ENCODE measurements at regions of chr17 and their contacts with region 1.

Region 1: DNA sequence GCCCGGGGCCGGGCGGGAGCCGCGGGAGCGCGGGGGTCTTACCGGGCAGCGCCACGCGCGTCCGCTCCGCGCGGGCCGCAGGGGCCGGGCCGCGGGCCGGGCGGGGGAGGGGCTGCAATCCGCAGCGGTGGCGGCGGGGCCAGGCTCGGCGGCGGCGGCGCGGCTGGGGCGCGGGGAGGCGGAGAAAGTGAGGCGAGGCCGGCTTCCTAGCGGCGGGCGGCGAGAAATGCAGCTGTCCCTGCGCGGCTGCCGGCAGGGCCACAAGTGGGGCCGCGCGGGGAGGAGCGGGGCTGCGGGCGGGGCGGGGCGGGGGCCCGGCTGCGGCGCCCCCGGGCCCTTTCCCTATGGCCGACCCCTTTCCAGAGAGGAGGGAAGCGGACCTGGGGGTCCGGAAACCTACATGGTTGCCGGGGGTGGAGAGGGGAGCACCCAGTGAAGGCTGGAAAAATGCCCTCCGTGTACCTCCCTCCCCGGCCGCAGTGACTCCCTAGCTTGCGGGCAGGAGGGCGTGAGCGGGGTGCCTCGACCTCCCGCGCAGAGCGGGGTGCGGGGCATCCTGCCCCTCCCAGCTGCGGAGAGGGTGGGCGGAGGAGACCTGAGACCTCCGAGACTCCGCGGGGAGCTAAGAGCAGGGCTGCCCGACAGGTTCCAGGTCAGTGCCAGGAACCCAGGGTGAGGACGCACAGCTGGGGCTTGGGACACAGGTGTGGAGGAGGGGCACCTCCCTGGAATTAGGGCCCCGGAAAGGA is at the start of gene CUEDC1:
- DNase-seq: peak; percentile 88 to 95
- ATAC-seq: peak; percentile 83
- H3K4me3 ChIP-seq: peak within 1 kb of the TSS; percentile 92 to 94
- H3K27ac ChIP-seq: peak within 1 kb of the TSS; percentile 97 to 99
- H3K4me1 ChIP-seq: no peaks in the 10 kb centered on the region
- H3K27me3 ChIP-seq: no peaks in the 10 kb centered on the region
- total RNA-seq, gene CUEDC1: 42.9 to 43.6 TPM

Region 2: DNA sequence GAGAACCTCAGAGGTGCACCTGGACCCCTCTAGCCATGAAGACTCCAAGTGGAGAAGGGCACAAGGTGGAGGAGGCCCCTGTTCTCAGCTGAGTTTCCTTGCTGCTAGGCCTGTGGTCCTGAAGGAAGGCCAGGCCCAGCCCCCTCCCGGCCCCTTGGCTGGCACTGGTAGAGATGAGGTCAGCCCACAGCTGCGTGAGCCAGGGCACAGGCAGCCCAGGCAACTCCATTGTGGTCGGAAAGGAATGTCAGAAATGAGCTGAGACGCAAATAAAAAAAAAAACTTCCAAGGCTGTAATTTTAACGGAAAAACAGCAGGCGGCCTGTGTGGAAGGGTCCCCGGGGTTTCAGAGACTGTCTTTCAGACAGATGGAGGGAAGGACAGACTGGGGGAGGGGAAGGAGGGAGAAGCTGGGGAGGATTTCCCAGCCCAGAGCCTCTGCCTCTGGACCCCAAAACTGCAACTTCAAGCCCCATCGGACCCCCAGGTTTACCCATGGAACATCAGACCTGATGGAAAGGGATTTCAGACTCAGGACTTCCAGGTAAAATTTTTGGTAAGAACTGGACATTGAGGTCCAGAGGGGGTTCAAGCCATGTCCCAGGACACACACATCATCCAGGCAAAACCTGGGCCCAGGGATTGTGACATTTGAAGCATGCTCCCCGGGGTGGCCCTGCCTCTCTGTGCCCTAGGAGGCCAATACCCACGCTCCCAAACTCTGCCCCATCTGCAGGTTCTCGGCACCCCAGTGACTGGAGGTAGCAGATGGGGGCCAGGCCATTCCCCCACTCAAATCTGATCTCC is 79.8 kb before region 1 on chr17:
- intact Hi-C with region 1: loop called (anchors 5 kb)
- DNase-seq: peak; percentile 94 to 95
- ATAC-seq: peak; percentile 96
- H3K4me3 ChIP-seq: no peak overlapping the region
- H3K27ac ChIP-seq: peak overlapping the region; percentile 71 to 92
- H3K4me1 ChIP-seq: no peaks in the 10 kb centered on the region
- H3K27me3 ChIP-seq: no peaks in the 10 kb centered on the region

Region 3: GRCh38 chr17:57892146-57892828 is 63.1 kb before region 1 on chr17:
- intact Hi-C with region 1: loop called in 1 of 2 experiments (anchors 1 kb)
- DNase-seq: peak; percentile 91 to 94
- ATAC-seq: peak; percentile 84
- H3K4me3 ChIP-seq: no peak overlapping the region
- H3K27ac ChIP-seq: peak overlapping the region; percentile 83 to 99
- H3K4me1 ChIP-seq: peaks cover 4 to 9% of the 10 kb centered on the region in 2 donors
- H3K27me3 ChIP-seq: no peaks in the 10 kb centered on the region

Region 4: GRCh38 chr17:57987580-57988421 is 32.4 kb after region 1 on chr17 and contains the start of gene VEZF1:
- intact Hi-C with region 1: loop called (anchors 5 kb)
- DNase-seq: peak; percentile 87 to 94
- ATAC-seq: peak; percentile 86
- H3K4me3 ChIP-seq: peak within 1 kb of the TSS; percentile 76 to 90
- H3K27ac ChIP-seq: peak within 1 kb of the TSS; percentile 77 to 94
- H3K4me1 ChIP-seq: peaks cover 4 to 9% of the 10 kb centered on the region in 2 donors
- H3K27me3 ChIP-seq: peaks cover 0 to 2% of the 10 kb centered on the region in 2 donors
- total RNA-seq, gene VEZF1: 57.3 to 59.8 TPM

Measured in aorta (tissue), 5 donors.